Gastrocnemius medialis (tissue), 4 donors: ENCODE measurements at regions of chr6 and their contacts with region 1.

Region 1: GRCh38 chr6:38493931-38494547 is 145.7 kb downstream of the BTBD9 start:
- DNase-seq: peak; percentile 45 to 60
- ATAC-seq: no peak
- H3K4me3 ChIP-seq: no peak overlapping the region
- H3K27ac ChIP-seq: no peak overlapping the region
- H3K4me1 ChIP-seq: peaks cover 2% of the 10 kb centered on the region in 2 donors
- H3K27me3 ChIP-seq: no peaks in the 10 kb centered on the region
- CTCF ChIP-seq: peak; percentile 81 to 95 (median 89)
- POLR2A ChIP-seq: no peak

Region 2: GRCh38 chr6:37483917-37484785 is 1009.9 kb before region 1 on chr6:
- in situ Hi-C with region 1: no loop called
- intact Hi-C with region 1: loop called (anchors 10 kb)
- DNase-seq: peak in 1 of 2 donors; percentile 23
- ATAC-seq: peak; percentile 30 to 31
- H3K4me3 ChIP-seq: no peak overlapping the region
- H3K27ac ChIP-seq: no peak overlapping the region
- H3K4me1 ChIP-seq: no peaks in the 10 kb centered on the region
- H3K27me3 ChIP-seq: no peaks in the 10 kb centered on the region
- CTCF ChIP-seq: peak; percentile 26 to 87 (median 69)
- POLR2A ChIP-seq: no peak

Region 3: DNA sequence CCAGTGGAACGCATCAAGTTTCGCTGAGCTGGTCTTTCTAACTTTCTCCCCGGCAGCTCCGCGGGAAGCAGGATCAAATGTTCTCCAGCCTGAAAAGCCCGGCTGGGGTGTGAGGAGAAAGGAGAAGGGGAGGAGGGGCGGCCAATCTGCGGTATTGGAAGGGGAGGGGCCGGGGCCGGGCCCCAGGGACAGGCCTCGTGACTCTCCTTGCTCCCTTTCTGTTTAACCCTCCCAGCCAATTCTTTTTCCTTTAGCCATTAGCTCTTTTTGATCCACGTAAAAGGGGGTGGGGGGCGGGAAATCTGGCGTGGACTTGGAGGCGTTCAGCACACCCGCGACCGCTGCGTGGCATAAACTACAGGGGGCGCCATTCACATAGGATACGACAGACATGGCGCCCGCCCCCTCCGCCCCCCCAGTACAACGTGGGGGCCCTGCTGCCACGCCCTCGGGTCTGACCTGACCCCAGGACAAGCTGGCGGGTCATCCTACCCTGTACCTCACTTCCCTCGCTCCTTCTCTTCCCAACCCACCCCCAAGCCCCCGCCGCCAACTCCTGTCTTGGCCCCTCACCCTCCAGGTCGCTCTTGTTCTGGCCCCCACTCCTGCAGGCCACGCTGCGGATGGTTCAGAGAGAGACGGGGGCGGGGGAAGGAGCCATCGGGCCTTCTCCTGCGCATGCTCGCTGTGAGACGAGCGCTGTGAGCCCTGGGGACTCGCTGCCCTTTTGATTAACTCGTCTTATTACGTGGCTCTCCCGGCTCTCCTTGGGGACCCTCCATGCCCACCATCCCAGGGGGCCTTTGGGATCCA is 788.6 kb before region 1 on chr6:
- in situ Hi-C with region 1: loop called in 3 of 4 experiments (anchors 10 to 25 kb)
- intact Hi-C with region 1: no loop called
- DNase-seq: peak; percentile 51 to 60
- ATAC-seq: peak; percentile 78 to 79
- H3K4me3 ChIP-seq: peak overlapping the region; percentile 53 to 64 (median 58)
- H3K27ac ChIP-seq: peak overlapping the region; percentile 65 to 73 (median 68)
- H3K4me1 ChIP-seq: peaks cover 8 to 11% of the 10 kb centered on the region in 2 donors
- H3K27me3 ChIP-seq: no peaks in the 10 kb centered on the region
- CTCF ChIP-seq: peak in 4 of 5 experiments; percentile 40 to 66 (median 60)
- POLR2A ChIP-seq: no peak

Region 4: DNA sequence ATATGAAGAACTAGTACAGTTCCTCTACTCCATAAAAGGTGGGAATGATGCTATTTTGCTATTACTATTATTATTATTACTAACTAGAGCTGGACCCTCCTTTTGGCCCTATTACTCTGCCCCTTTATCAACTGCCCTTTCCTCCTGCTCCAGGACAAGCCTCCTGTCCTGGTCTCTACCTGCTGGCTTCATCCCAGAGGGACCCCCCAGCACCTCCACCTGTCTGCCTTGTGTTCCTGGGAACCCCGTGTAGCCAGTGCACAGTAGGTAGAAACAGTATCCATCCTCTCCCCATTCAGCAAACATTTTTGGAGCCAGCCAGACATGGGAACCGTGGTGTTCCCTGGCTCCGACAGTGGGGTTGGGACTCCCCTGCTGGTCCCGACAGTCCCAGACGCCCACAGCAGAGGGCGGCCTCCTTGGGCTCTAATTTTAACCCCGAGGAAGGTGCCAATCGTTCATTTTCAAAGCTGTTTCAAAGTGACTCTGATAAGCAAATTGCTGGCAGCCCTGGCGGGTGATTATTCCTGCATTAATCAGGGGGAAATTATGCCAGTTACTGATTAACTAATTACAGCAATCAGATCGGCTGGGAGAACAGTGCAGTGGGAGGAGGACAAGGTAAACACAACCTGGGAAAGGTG is 752.2 kb before region 1 on chr6:
- in situ Hi-C with region 1: no loop called
- intact Hi-C with region 1: loop called (anchors 2 kb)
- DNase-seq: no peak
- ATAC-seq: no peak
- H3K4me3 ChIP-seq: no peak overlapping the region
- H3K27ac ChIP-seq: no peak overlapping the region
- H3K4me1 ChIP-seq: no peaks in the 10 kb centered on the region
- H3K27me3 ChIP-seq: peaks cover 0 to 3% (median 0%) of the 10 kb centered on the region in 3 donors
- CTCF ChIP-seq: peak in 4 of 5 experiments; percentile 25 to 58 (median 42)
- POLR2A ChIP-seq: no peak

Region 5: DNA sequence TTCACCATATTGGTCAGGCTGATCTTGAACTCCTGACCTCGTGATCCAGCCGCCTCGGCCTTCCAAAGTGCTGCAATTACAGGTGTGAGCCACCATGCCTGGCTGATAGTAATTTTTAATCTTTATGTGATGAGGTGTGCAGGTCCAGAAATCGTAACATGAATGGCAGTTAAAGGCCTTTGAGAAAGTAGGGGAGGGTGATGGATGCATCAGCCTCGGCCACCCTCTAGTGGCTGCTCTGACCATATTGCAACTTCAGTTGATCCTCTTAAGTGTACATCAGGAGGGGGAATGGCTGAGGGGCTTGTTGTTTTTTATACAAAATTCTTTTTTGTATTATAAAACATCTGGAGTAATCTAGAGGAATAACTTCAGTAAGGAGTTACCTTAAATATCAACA is 481.5 kb before region 1 on chr6:
- in situ Hi-C with region 1: loop called in 1 of 4 experiments (anchors 25 kb)
- intact Hi-C with region 1: no loop called
- DNase-seq: peak in 1 of 2 donors; percentile 24
- ATAC-seq: peak; percentile 72 to 83
- H3K4me3 ChIP-seq: no peak overlapping the region
- H3K27ac ChIP-seq: no peak overlapping the region
- H3K4me1 ChIP-seq: peaks cover 36 to 38% of the 10 kb centered on the region in 2 donors
- H3K27me3 ChIP-seq: no peaks in the 10 kb centered on the region
- CTCF ChIP-seq: peak; percentile 48 to 71 (median 63)
- POLR2A ChIP-seq: no peak

Region 6: GRCh38 chr6:38179300-38179699 is 314.7 kb before region 1 on chr6:
- in situ Hi-C with region 1: loop called in 1 of 4 experiments (anchors 25 kb)
- intact Hi-C with region 1: loop called (anchors 5 kb)
- DNase-seq: no peak
- ATAC-seq: peak in 1 of 2 donors; percentile 19
- H3K4me3 ChIP-seq: no peak overlapping the region
- H3K27ac ChIP-seq: no peak overlapping the region
- H3K4me1 ChIP-seq: peaks cover 4 to 5% of the 10 kb centered on the region in 2 donors
- H3K27me3 ChIP-seq: no peaks in the 10 kb centered on the region
- CTCF ChIP-seq: no peak
- POLR2A ChIP-seq: no peak